ENCODE measurements at regions of chr11 and their contacts with region 1.

Region 1: GRCh38 chr11:75406338-75406777 is 7.0 kb downstream of the RPS3 start:
- DNase-seq: no peak
- H3K4me3 ChIP-seq: no peak overlapping the region
- H3K27ac ChIP-seq: no peak overlapping the region
- H3K4me1 ChIP-seq: peaks cover 0 to 9% (median 2%) of the 10 kb centered on the region in 4 experiments; a peak in 3 of 7 replicates
- H3K27me3 ChIP-seq: no peaks in the 10 kb centered on the region
- CTCF ChIP-seq: no peak
- EP300 ChIP-seq: no peak
- POLR2A ChIP-seq: no peak; a peak in 1 of 3 replicates
- RAD21 ChIP-seq: no peak

Region 2: DNA sequence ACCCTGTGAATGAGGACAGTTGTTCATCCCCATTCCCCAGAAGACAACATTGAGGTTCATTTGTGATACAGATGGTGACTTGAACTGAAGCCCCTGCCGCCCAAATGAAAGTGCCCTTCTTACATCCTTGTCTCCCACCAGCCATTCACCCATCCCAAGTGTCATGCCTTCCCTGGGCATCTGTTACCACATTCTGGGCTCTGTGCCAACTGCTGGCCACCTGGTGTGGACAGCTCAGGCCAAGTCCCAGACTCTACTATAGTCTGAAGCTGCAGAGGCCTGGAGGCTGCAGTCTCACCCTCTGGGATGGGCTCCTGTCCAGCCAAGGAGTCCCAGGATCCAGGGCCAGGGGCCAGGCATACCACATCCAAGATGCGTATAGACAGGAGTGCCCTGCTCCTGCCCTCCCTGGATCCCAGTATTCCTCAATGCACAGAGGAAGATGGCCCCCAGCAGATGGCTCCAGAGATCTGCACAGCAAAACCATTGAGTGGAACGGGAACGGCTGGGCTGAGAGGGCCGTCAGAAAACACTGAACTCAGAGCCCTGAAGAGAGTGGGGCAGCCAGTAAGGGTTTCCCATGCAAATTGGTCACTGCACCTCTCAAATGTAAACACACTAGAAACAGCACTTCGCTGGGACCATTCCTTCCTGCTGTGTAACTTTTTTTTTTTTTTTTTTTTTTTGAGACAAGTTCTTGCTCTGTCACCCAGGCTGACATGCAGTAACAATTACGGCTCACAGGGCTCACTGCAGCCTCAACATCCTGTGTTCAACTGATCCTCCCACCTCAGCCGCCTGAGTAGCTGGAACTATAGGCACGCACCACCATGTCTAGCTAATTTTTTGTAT is 77.7 kb before region 1 on chr11:
- CTCF ChIA-PET with region 1: interaction called, 3 read pairs
- POLR2A ChIA-PET with region 1: interaction called, 19 read pairs
- DNase-seq: peak in 1 of 2 experiments; percentile 65
- H3K4me3 ChIP-seq: no peak overlapping the region
- H3K27ac ChIP-seq: no peak overlapping the region
- H3K4me1 ChIP-seq: peaks cover 0 to 13% (median 2%) of the 10 kb centered on the region in 4 experiments; a peak in 4 of 7 replicates
- H3K27me3 ChIP-seq: no peaks in the 10 kb centered on the region
- CTCF ChIP-seq: peak; percentile 60 to 77 (median 70)
- EP300 ChIP-seq: no peak
- POLR2A ChIP-seq: no peak
- RAD21 ChIP-seq: peak; percentile 86 to 90

Region 3: DNA sequence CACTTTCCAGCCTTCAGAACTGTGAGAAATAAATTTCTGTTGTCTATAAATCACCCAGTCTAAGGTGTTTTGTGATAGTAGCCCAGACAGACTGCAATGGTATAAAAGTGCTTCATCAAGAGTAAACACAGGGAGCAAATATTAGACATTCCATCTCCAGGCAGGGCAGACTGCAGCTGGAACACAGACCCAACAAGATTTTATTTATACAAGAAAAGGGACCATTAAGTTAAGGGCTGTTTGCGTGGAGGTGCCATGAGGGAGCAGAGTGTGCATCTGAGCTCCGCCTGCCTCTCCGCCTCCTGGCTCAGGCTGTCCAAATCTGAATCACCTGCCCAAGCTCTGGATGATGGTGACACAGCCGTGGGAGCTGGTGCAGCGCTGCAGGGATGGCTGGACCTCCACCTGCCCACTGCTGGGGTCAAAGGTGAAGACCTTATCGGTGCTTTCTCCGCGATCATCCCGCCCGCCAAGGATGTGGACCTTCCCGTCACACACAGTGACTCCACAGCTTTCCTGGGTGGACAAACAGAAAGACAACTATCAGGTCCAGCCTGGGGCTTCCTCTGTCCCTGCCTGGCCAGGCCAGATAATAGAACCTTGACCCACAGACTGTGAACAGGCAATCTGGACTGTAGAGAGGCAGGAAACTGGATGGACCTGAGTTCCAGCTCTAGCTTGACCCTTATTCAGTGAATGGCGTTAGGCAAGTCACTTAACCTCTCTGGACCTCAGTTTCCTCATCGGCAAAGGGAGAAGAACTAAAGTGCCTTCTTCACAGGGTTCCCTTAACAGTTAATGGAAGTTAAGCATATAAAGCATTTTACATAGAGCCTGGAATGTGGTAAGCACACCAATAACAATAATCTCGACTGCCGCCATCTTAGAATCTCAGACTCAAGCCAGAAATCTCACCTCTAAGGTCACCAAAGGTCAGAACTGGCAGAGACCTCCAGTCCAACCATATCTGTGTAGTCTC is 16.2 kb after region 1 on chr11:
- CTCF ChIA-PET with region 1: interaction called, 39 read pairs
- POLR2A ChIA-PET with region 1: interaction called, 570 read pairs
- DNase-seq: no peak
- H3K4me3 ChIP-seq: no peak overlapping the region
- H3K27ac ChIP-seq: no peak overlapping the region
- H3K4me1 ChIP-seq: peaks cover 0 to 5% (median 3%) of the 10 kb centered on the region in 4 experiments; a peak in 3 of 7 replicates
- H3K27me3 ChIP-seq: peaks cover 1 to 8% (median 5%) of the 10 kb centered on the region in 4 experiments; a peak in 5 of 7 replicates
- CTCF ChIP-seq: no peak
- EP300 ChIP-seq: no peak
- POLR2A ChIP-seq: no peak
- RAD21 ChIP-seq: no peak

Region 4: DNA sequence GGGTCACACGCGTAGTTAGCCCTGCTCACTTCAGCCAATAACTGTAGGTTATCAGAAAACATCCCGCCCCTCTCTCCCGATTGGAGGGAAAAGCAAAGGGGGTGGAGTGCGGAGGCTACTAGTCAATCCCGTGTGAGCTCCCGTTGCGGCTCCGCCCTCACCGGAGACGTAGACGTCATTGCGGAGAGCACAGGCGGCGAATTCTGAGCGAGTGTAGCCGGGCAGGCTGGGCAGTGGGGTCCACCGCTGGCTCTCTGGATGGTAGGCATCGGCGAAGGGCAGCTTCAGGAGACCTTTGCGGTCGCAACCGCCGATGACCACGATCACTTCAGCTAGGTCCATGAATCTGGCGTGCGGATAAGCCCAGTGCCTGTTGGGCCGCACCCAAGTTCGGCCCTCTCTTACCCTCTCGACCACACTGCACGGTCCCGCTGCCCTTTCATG is 21.9 kb after region 1 on chr11:
- CTCF ChIA-PET with region 1: interaction called, 39 read pairs
- POLR2A ChIA-PET with region 1: interaction called, 570 read pairs
- DNase-seq: no peak
- H3K4me3 ChIP-seq: no peak overlapping the region
- H3K27ac ChIP-seq: no peak overlapping the region
- H3K4me1 ChIP-seq: peaks cover 0 to 23% (median 15%) of the 10 kb centered on the region in 4 experiments; a peak in 6 of 7 replicates
- H3K27me3 ChIP-seq: peaks cover 47 to 66% (median 60%) of the 10 kb centered on the region in 4 experiments
- CTCF ChIP-seq: no peak
- EP300 ChIP-seq: no peak
- POLR2A ChIP-seq: no peak
- RAD21 ChIP-seq: no peak